HCT116 (cell line): ENCODE measurements at regions of chr19 and their contacts with region 1.

Region 1: GRCh38 chr19:32971715-32972540 is at the starts of genes CEP89 and FAAP24:
- DNase-seq: peak; percentile 99
- ATAC-seq: peak; percentile 96
- H3K4me3 ChIP-seq: peak within 1 kb of the TSS; percentile 79 to 98
- H3K27ac ChIP-seq: peak within 1 kb of the TSS; percentile 58
- H3K4me1 ChIP-seq: peaks cover 5 to 16% of the 10 kb centered on the region in 2 experiments; a peak in 3 of 4 replicates
- H3K27me3 ChIP-seq: no peaks in the 10 kb centered on the region
- CTCF ChIP-seq: no peak
- POLR2A ChIP-seq: peak; percentile 40
- RAD21 ChIP-seq: no peak
- total RNA-seq, gene CEP89: 27.6 TPM
- total RNA-seq, gene FAAP24: 4.9 TPM

Region 2: GRCh38 chr19:32691291-32691951 is 280.5 kb before region 1 on chr19 and contains the start of gene NUDT19:
- CTCF ChIA-PET with region 1: no interaction called
- POLR2A ChIA-PET with region 1: interaction called, 3 read pairs
- RAD21 ChIA-PET with region 1: no interaction called
- intact Hi-C with region 1: loop called (anchors 2 kb)
- DNase-seq: peak; percentile 75
- ATAC-seq: peak; percentile 96
- H3K4me3 ChIP-seq: peak within 1 kb of the TSS; percentile 69 to 79
- H3K27ac ChIP-seq: peak within 1 kb of the TSS; percentile 97
- H3K4me1 ChIP-seq: peaks cover 12 to 36% of the 10 kb centered on the region in 2 experiments
- H3K27me3 ChIP-seq: no peaks in the 10 kb centered on the region
- CTCF ChIP-seq: no peak
- POLR2A ChIP-seq: peak; percentile 84
- RAD21 ChIP-seq: no peak
- total RNA-seq, gene NUDT19: 22.1 TPM

Region 3: DNA sequence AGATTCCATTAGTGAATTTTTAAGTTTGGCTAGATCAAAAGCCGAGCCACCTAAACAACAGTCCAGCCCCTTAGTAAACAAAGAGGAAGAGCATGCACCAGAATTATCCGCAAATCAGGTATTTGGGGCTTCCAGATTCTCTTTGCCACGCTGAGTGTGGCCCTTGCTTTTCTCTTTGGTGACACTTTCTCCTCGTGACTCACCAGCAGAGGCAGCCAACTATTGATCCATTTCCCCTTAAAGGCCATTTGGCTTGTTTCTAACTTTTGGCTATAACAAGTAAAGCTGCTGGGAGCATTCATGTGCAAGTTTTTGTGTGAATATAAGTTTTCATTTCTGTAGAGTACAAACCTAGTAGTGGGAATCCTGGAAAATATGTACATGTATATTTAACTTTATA is 142.4 kb after region 1 on chr19:
- CTCF ChIA-PET with region 1: interaction called, 6 read pairs
- POLR2A ChIA-PET with region 1: no interaction called
- RAD21 ChIA-PET with region 1: interaction called in 1 of 2 experiments, 3 read pairs
- intact Hi-C with region 1: loop called (anchors 1 kb)
- DNase-seq: peak; percentile 13
- ATAC-seq: no peak
- H3K4me3 ChIP-seq: no peak overlapping the region
- H3K27ac ChIP-seq: no peak overlapping the region
- H3K4me1 ChIP-seq: peaks cover 4 to 9% of the 10 kb centered on the region in 2 experiments; a peak in 3 of 4 replicates
- H3K27me3 ChIP-seq: no peaks in the 10 kb centered on the region
- CTCF ChIP-seq: no peak
- POLR2A ChIP-seq: no peak
- RAD21 ChIP-seq: no peak

Region 4: DNA sequence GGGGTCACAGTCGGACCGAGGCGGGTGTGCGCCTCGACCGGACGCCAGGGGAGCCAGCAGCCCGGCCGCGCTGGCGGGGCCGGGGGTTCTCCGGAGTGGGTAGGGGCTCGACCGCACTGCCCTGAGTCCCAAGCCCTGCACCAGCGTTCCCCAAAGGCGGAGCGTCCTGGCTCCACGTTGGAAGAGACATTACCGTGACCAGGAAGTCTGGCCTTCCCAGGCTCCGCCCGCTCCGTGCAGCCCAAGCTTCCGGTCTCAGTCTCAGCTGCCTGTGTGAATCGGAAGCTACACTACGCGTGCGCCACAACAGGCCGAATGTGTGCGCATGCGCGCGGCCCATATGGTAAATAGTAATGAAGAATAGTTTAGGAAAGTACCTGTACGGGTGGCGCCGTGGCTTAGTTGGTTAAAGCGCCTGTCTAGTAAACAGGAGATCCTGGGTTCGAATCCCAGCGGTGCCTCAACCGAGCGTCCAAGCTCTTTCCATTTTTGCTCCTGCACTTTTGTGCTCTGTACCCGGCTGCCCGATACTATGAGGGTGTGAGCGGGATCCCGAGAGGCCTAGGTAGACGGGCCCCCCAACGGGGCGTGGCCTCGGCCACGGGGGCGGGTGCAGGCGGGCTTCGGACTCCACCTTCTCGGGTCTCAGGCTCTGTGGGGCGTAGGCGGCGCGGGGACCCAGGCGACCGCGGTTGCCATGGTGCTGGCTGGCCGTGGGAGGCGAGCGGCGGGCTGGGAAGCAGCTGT is 204.9 kb after region 1 on chr19:
- CTCF ChIA-PET with region 1: no interaction called
- POLR2A ChIA-PET with region 1: no interaction called
- RAD21 ChIA-PET with region 1: no interaction called
- intact Hi-C with region 1: loop called (anchors 5 kb)
- DNase-seq: peak; percentile 97
- ATAC-seq: peak; percentile 92
- H3K4me3 ChIP-seq: peak overlapping the region; percentile 85 to 87
- H3K27ac ChIP-seq: peak overlapping the region; percentile 89
- H3K4me1 ChIP-seq: peaks cover 20 to 31% of the 10 kb centered on the region in 2 experiments
- H3K27me3 ChIP-seq: no peaks in the 10 kb centered on the region
- CTCF ChIP-seq: peak in 2 of 3 experiments; percentile 6 to 12; a peak in 1 of 6 replicates
- POLR2A ChIP-seq: peak; percentile 95
- RAD21 ChIP-seq: no peak